Dendritic cell treated with granulocyte-macrophage colony-stimulating factor and Interleukin-4, amounts not matched to agents 40 ng/mL and 50 ng/mL, for 4 days (primary cell): ENCODE measurements at regions of chr10 and their contacts with region 1.

Region 1: DNA sequence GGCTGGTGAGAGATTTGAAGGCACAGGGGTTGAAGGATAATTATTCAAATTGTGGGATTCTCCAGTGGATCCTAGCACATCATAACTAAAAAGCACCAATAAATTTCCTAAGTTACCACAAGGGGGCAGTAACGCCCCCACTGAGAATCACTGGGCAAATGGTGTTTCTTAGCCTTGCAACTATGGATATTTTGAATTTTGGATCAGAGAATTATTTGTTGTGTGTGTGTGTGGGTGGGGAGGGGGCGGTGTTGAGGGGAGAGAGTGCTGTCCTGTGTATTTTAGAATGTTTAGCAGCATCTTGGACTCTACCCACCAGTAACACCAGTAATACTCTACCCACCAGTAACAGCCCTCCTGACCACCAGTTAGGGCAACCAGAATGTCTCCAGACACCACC is 63.3 kb upstream of the PRKG1 start:
- H3K4me3 Mint-ChIP-seq: no peak overlapping the region
- H3K27ac Mint-ChIP-seq: no peak overlapping the region
- H3K4me1 Mint-ChIP-seq: no peaks in the 10 kb centered on the region
- H3K27me3 Mint-ChIP-seq: peaks cover 1% of the 10 kb centered on the region

Region 2: DNA sequence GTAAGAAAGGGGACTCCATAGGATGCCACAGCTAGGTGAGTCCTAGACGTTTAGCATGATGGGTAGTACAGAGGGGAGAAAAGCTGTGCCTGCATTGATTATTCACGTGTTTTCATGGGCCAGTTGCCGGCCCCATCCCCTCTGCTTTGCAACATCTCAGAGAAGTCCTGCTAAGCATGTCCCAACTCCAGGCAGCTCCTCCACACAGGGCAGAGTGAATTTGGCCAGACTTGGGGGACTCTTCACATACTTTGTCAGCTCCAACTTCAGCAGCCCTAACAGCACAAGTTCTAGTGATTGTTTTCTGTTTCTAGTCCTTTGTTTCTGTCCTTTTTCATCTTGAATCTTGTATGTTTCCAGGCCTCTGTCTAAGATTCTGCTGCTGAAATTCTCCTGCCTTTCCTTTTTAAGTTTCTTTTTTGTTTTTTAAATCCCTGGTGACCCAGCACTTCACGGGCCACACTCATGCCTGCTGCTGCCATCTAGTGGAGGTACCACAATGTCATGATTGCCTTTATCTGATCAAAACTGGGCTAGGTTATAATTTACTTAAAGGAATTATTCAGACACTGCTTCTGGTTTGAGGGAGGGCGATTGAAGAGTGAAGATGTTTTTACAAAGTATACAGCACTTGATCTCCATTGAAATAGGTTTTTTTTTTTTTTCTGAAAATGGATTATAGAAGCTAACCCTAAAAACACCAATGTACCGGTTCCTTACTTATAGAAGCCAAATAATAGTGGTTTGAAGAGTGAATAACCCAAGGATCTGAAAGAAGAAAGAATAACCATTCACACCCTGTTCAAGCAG is 411.5 kb after region 1 on chr10:
- intact Hi-C with region 1: loop called (anchors 5 kb)
- H3K4me3 Mint-ChIP-seq: no peak overlapping the region
- H3K27ac Mint-ChIP-seq: no peak overlapping the region
- H3K4me1 Mint-ChIP-seq: no peaks in the 10 kb centered on the region
- H3K27me3 Mint-ChIP-seq: no peaks in the 10 kb centered on the region

Region 3: DNA sequence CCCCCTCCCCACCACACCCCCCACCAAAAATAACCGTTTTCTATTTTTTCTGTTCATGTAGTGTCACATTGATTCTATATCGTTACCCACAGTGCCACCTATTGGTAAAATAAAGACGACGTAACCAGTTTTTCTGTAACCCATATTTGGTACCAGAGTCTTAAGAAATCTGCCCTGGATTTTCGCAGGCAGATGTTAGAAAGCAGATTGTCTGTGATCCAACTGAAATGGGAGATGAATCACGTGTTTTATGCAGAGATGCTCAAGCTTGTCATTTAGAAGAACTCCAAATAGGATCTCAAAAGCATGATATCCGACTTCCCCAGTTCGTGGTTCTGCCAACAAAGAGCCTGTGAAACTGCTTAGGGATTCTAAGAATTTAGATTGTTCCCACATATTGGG is 949.5 kb after region 1 on chr10:
- intact Hi-C with region 1: loop called (anchors 5 kb)
- H3K4me3 Mint-ChIP-seq: no peak overlapping the region
- H3K27ac Mint-ChIP-seq: no peak overlapping the region
- H3K4me1 Mint-ChIP-seq: no peaks in the 10 kb centered on the region
- H3K27me3 Mint-ChIP-seq: no peaks in the 10 kb centered on the region

Region 4: GRCh38 chr10:52215745-52216361 is 1204.9 kb after region 1 on chr10:
- intact Hi-C with region 1: loop called (anchors 5 kb)
- H3K4me3 Mint-ChIP-seq: no peak overlapping the region
- H3K27ac Mint-ChIP-seq: no peak overlapping the region
- H3K4me1 Mint-ChIP-seq: no peaks in the 10 kb centered on the region
- H3K27me3 Mint-ChIP-seq: no peaks in the 10 kb centered on the region